Mammary epithelial cell (primary cell): ENCODE measurements at regions of chr5 and their contacts with region 1.

Region 1: GRCh38 chr5:177209610-177210009 is 76.0 kb downstream of the NSD1 start:
- DNase-seq: no peak
- H3K4me3 ChIP-seq: no peak overlapping the region
- H3K27ac ChIP-seq: no peak overlapping the region
- H3K4me1 ChIP-seq: no peaks in the 10 kb centered on the region
- H3K27me3 ChIP-seq: no peaks in the 10 kb centered on the region
- CTCF ChIP-seq: no peak

Region 2: GRCh38 chr5:176573564-176574296 is 635.9 kb before region 1 on chr5:
- CTCF ChIA-PET with region 1: no interaction called
- dilution Hi-C with region 1: no loop called
- in situ Hi-C with region 1: no loop called
- intact Hi-C with region 1: no loop called
- DNase-seq: peak; percentile 20
- H3K4me3 ChIP-seq: no peak overlapping the region
- H3K27ac ChIP-seq: no peak overlapping the region
- H3K4me1 ChIP-seq: peaks cover 6% of the 10 kb centered on the region
- H3K27me3 ChIP-seq: no peaks in the 10 kb centered on the region
- CTCF ChIP-seq: peak; percentile 69 to 83

Region 3: GRCh38 chr5:176739461-176740051 is 470.1 kb before region 1 on chr5:
- CTCF ChIA-PET with region 1: no interaction called
- dilution Hi-C with region 1: no loop called
- in situ Hi-C with region 1: no loop called
- intact Hi-C with region 1: no loop called
- DNase-seq: no peak
- H3K4me3 ChIP-seq: no peak overlapping the region
- H3K27ac ChIP-seq: no peak overlapping the region
- H3K4me1 ChIP-seq: peaks cover 3% of the 10 kb centered on the region
- H3K27me3 ChIP-seq: peaks cover 21% of the 10 kb centered on the region
- CTCF ChIP-seq: no peak

Region 4: GRCh38 chr5:176929654-176930053 is 280.0 kb before region 1 on chr5:
- CTCF ChIA-PET with region 1: no interaction called
- dilution Hi-C with region 1: no loop called
- in situ Hi-C with region 1: no loop called
- intact Hi-C with region 1: no loop called
- DNase-seq: no peak
- H3K4me3 ChIP-seq: no peak overlapping the region
- H3K27ac ChIP-seq: no peak overlapping the region
- H3K4me1 ChIP-seq: peaks cover 2% of the 10 kb centered on the region
- H3K27me3 ChIP-seq: no peaks in the 10 kb centered on the region
- CTCF ChIP-seq: no peak

Region 5: GRCh38 chr5:177133091-177133852 is 76.3 kb before region 1 on chr5 and contains the start of gene NSD1:
- CTCF ChIA-PET with region 1: no interaction called
- dilution Hi-C with region 1: loop called (anchors 5 kb)
- in situ Hi-C with region 1: no loop called
- intact Hi-C with region 1: no loop called
- DNase-seq: peak; percentile 57
- H3K4me3 ChIP-seq: peak within 1 kb of the TSS; percentile 67 to 69 (median 69)
- H3K27ac ChIP-seq: peak within 1 kb of the TSS; percentile 63
- H3K4me1 ChIP-seq: peaks cover 34% of the 10 kb centered on the region
- H3K27me3 ChIP-seq: no peaks in the 10 kb centered on the region
- CTCF ChIP-seq: no peak
- total RNA-seq, gene NSD1: 53.0 to 55.7 TPM

Region 6: GRCh38 chr5:177146891-177147638 is 62.5 kb before region 1 on chr5:
- CTCF ChIA-PET with region 1: no interaction called
- dilution Hi-C with region 1: no loop called
- in situ Hi-C with region 1: loop called in 1 of 2 experiments (anchors 10 kb)
- intact Hi-C with region 1: loop called (anchors 5 kb)
- DNase-seq: no peak
- H3K4me3 ChIP-seq: no peak overlapping the region
- H3K27ac ChIP-seq: no peak overlapping the region
- H3K4me1 ChIP-seq: no peaks in the 10 kb centered on the region
- H3K27me3 ChIP-seq: no peaks in the 10 kb centered on the region
- CTCF ChIP-seq: no peak

Region 7: DNA sequence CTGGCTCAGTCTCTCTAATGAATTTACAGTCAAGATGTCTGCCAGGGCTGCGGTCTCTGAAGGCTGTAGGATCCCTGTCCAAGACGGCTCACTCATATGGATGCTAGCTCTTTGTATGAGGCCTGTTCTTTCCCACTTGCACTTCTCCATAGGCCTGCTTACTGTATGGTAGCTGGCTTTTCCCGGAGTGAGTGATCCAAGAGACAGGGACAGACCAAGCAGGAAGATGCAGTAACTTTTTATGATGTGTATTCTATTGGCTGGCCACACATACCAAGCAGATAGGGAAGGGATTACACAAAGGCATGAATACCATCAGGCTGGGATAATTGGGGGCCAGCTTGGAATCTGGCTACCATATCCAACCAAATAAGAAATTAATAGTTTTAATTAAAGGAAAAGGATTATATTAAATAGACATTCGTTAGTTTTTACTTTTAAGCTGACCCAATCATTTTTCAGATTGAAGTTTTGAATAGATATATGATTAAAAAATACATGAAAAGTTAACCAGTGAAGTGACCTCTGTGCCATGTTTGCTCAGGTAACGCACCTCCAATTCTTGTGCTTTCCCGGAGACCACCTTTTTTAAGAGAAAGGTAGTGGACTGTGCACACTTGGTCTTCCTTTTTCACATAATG is 55.5 kb before region 1 on chr5:
- CTCF ChIA-PET with region 1: no interaction called
- dilution Hi-C with region 1: no loop called
- in situ Hi-C with region 1: loop called in 1 of 2 experiments (anchors 10 kb)
- intact Hi-C with region 1: loop called (anchors 5 kb)
- DNase-seq: no peak
- H3K4me3 ChIP-seq: no peak overlapping the region
- H3K27ac ChIP-seq: no peak overlapping the region
- H3K4me1 ChIP-seq: no peaks in the 10 kb centered on the region
- H3K27me3 ChIP-seq: no peaks in the 10 kb centered on the region
- CTCF ChIP-seq: no peak

Region 8: DNA sequence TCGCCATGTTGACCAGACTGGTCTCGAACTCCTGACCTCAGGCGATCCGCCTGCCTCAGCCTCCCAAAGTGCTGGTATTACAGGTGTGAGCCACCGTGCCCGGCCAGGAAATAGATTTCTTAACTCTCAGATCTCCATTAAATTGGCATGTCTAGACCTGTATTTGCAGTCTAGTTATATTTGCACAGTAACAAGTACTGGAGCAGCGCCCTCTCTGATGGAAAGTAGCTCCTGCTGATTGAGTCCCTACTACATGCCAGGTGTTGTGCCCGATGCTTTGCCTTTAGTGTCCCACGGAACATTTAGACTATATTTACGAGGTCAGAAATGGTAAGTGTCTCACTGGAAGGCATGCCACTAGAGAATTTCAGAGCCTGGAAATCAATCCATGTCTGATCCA is 366.6 kb after region 1 on chr5:
- CTCF ChIA-PET with region 1: no interaction called
- dilution Hi-C with region 1: no loop called
- in situ Hi-C with region 1: no loop called
- intact Hi-C with region 1: no loop called
- DNase-seq: peak; percentile 12
- H3K4me3 ChIP-seq: no peak overlapping the region
- H3K27ac ChIP-seq: no peak overlapping the region
- H3K4me1 ChIP-seq: peaks cover 10% of the 10 kb centered on the region
- H3K27me3 ChIP-seq: no peaks in the 10 kb centered on the region
- CTCF ChIP-seq: no peak